Gastrocnemius medialis (tissue), 4 donors: ENCODE measurements at regions of chr11 and their contacts with region 1.

Region 1: GRCh38 chr11:70176940-70177689 is 26.0 kb upstream of the FADD start:
- DNase-seq: no peak
- ATAC-seq: no peak
- H3K4me3 ChIP-seq: no peak overlapping the region
- H3K27ac ChIP-seq: no peak overlapping the region
- H3K4me1 ChIP-seq: no peaks in the 10 kb centered on the region
- H3K27me3 ChIP-seq: no peaks in the 10 kb centered on the region
- CTCF ChIP-seq: peak in 3 of 5 experiments; percentile 10 to 38 (median 28)
- POLR2A ChIP-seq: no peak

Region 2: GRCh38 chr11:69925366-69926196 is 251.5 kb before region 1 on chr11:
- in situ Hi-C with region 1: loop called in 1 of 4 experiments (anchors 10 kb)
- intact Hi-C with region 1: no loop called
- DNase-seq: no peak
- ATAC-seq: no peak
- H3K4me3 ChIP-seq: no peak overlapping the region
- H3K27ac ChIP-seq: no peak overlapping the region
- H3K4me1 ChIP-seq: no peaks in the 10 kb centered on the region
- H3K27me3 ChIP-seq: peaks cover 0 to 17% (median 5%) of the 10 kb centered on the region in 3 donors
- CTCF ChIP-seq: no peak
- POLR2A ChIP-seq: no peak